Ovary (tissue), 10 donors: ENCODE measurements at regions of chr12 and their contacts with region 1.

Region 1: GRCh38 chr12:57111031-57111734 is at the start of gene STAT6:
- DNase-seq: peak; percentile 82 to 85 (median 84)
- H3K4me3 ChIP-seq: peak within 1 kb of the TSS; percentile 49
- H3K27ac ChIP-seq: peak within 1 kb of the TSS; percentile 61 to 99
- H3K4me1 ChIP-seq: peaks cover 2% of the 10 kb centered on the region
- H3K27me3 ChIP-seq: no peaks in the 10 kb centered on the region
- CTCF ChIP-seq: peak in 2 of 3 donors; percentile 50 to 59
- EP300 ChIP-seq: no peak
- POLR2A ChIP-seq: peak; percentile 73
- total RNA-seq, gene STAT6: 67.4 to 211 (median 168) TPM

Region 2: DNA sequence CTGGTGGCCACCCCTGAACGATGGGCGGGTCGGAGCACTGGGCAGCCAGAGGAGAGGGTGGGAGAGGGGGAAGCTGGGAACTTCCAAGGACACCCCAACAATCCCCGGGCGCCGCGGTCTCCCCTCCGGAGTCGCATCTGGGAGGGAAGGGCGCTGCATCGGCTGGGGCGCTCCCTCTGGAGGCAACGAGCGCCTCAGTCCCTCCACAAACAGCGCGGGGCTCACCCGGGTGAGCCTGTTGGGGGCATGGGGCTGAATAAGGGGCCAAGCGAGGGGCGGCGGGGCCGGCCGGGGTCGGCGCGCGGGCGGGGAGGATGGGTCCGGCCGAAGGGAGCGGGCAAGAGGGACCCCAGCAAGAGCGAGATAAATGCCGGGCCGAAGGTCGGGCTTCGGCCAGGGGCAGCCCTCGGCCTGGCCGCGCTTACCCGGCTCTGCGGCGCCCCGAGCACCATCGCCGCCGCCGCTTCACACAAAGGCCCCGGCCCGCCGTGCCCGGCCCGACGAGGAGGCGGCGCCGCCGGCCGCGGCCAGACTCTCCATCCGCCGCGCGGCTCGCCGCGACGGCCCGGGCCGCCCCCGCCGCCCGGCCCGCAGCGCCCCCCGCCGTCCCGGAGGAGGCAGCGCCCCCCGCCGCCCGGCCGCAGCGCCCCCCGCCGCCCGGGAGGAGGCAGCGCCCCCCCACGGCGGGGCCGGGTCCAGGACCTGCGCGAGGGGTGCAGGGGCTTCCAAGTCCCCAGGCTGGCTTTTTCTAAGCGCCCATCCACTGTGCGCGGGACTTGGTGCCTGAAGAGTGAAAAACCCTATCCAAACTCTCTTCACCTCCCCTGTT is 105.0 kb before region 1 on chr12 and contains the start of gene ZBTB39:
- intact Hi-C with region 1: loop called in 1 of 4 experiments (anchors 5 kb)
- DNase-seq: peak; percentile 47 to 79 (median 67)
- H3K4me3 ChIP-seq: peak within 1 kb of the TSS; percentile 61
- H3K27ac ChIP-seq: peak within 1 kb of the TSS; percentile 76 to 83
- H3K4me1 ChIP-seq: peaks cover 5% of the 10 kb centered on the region
- H3K27me3 ChIP-seq: no peaks in the 10 kb centered on the region
- CTCF ChIP-seq: peak in 2 of 3 donors; percentile 18 to 30
- EP300 ChIP-seq: no peak
- POLR2A ChIP-seq: peak; percentile 16
- total RNA-seq, gene ZBTB39: 3.3 to 10.4 (median 7.4) TPM

Region 3: GRCh38 chr12:57069523-57069922 is 41.7 kb before region 1 on chr12:
- intact Hi-C with region 1: loop called (anchors 2 to 5 kb)
- DNase-seq: peak in 4 of 5 donors; percentile 55 to 79 (median 58)
- H3K4me3 ChIP-seq: no peak overlapping the region
- H3K27ac ChIP-seq: peak overlapping the region; percentile 56 to 76
- H3K4me1 ChIP-seq: peaks cover 1% of the 10 kb centered on the region
- H3K27me3 ChIP-seq: no peaks in the 10 kb centered on the region
- CTCF ChIP-seq: peak; percentile 78 to 97 (median 96)
- EP300 ChIP-seq: no peak
- POLR2A ChIP-seq: no peak

Region 4: GRCh38 chr12:57088459-57089248 is 22.5 kb before region 1 on chr12 and contains the start of gene NAB2:
- intact Hi-C with region 1: loop called in 2 of 4 experiments (anchors 2 kb)
- DNase-seq: peak; percentile 92 to 96 (median 95)
- H3K4me3 ChIP-seq: peak within 1 kb of the TSS; percentile 67
- H3K27ac ChIP-seq: peak within 1 kb of the TSS; percentile 93 to 99
- H3K4me1 ChIP-seq: peaks cover 20% of the 10 kb centered on the region
- H3K27me3 ChIP-seq: no peaks in the 10 kb centered on the region
- CTCF ChIP-seq: peak in 1 of 3 donors; percentile 9
- EP300 ChIP-seq: peak; percentile 60
- POLR2A ChIP-seq: peak; percentile 88
- total RNA-seq, gene NAB2: 37.6 to 103 (median 70.8) TPM

Region 5: DNA sequence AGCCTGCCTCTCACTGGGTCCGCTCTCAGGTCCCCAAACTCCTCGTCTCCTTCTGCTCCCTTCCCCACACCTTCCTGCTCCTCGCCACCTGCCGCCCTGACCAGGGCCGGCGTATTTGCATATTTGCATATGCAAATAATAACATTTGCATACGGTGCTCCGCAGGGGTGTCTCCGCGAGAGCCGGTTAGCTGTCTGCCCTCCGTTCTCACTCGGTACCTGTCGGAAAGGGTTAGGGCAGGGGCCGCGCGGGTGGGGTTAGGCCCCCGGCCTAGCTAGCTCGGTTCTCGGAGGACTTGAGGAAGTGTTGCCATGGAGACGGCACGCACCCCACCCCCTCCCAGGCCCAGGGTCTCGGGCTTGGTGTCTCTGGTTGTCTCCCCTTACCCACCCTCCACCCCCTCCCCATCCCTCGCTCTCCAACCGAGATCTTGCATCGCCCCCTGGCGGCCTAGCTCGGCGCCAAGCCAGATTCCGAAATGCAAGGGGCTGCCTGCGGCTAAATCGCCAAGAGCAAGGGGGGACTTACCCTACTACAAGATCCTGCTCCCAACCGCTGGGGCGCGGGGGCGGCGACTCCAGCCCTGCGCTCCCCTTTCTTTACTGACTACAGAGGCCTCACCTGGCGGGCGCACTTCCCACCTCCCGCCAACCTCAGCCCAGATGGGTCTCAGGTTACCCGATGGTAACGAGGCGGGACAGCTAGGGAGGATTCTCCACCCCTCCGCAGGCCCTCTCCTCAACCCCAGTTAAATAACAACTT is 131.7 kb after region 1 on chr12:
- intact Hi-C with region 1: no loop called
- DNase-seq: peak in 3 of 5 donors; percentile 53 to 70 (median 63)
- H3K4me3 ChIP-seq: peak overlapping the region; percentile 20
- H3K27ac ChIP-seq: no peak overlapping the region
- H3K4me1 ChIP-seq: peaks cover 16% of the 10 kb centered on the region
- H3K27me3 ChIP-seq: peaks cover 2% of the 10 kb centered on the region
- CTCF ChIP-seq: no peak
- EP300 ChIP-seq: no peak
- POLR2A ChIP-seq: no peak